Activated B cell treated with CpG ODN at 0.5 μM for 24 hours (primary cell): ENCODE measurements at regions of chr5 and their contacts with region 1.

Region 1: DNA sequence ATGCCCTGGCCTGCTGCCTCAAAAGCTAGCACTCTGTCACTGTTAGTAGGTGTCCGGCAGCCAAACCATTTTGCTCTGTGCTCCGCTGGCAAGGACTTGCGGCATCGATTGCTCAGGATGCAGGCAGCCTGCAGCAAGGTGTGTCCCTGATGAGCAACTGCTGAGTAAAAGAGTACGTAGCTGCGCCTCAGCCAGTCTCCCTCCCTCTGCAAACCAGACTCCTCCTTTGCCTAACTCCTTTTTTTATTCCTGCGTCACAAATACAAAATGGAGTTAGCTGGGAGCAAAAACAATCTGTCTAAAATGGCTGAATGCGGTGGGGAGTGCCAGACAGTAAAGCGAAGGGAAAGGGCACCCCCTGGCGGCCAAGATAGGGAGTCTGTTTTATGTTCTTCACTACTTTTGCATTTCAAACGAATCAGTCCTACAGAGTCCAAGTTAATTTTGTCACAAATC is 61.1 kb downstream of the DIAPH1 start:
- DNase-seq: peak; percentile 66
- ATAC-seq: peak; percentile 82
- H3K4me3 Mint-ChIP-seq: no peak overlapping the region
- H3K27ac Mint-ChIP-seq: peak overlapping the region; percentile 72
- H3K4me1 Mint-ChIP-seq: peaks cover 4% of the 10 kb centered on the region
- H3K27me3 Mint-ChIP-seq: no peaks in the 10 kb centered on the region
- CTCF ChIP-seq: peak; percentile 38

Region 2: DNA sequence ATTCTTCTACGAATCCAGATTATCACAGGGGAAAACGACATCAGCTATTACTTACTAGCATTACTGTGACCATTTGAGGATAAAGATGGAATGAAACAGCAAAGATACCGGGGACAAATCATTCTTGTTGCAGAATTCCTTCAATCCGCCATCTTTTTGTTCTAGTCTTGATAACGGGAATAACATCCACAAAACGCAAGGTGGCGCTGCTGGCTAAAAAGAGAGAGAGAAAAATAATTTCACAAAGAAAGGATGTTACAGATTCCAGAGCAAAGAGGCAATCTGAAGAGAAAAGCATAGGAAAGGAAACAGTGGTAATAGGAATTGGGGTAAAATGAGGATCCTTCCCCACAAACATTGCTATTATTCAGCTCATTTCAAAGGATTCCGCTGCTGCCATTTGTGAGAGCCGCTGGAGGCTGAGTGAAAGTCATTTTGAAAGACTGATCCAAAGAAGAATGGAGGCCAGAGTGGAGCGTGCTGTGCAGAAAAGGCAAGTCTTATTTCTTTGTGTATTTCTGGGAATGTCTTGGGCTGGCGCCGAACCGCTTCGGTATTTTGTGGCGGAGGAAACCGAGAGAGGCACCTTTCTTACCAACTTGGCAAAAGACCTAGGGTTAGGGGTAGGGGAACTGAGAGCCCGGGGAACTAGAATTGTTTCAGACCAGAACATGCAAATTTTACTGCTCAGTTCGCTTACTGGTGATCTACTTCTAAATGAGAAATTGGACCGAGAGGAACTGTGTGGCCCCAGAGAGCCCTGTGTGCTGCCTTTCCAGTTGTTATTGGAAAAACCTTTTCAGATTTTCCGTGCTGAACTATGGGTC is 385.1 kb before region 1 on chr5 and contains the start of gene PCDHB7:
- CTCF ChIA-PET with region 1: no interaction called
- POLR2A ChIA-PET with region 1: no interaction called
- intact Hi-C with region 1: loop called (anchors 5 kb)
- DNase-seq: no peak
- ATAC-seq: no peak
- H3K4me3 Mint-ChIP-seq: no peak within 1 kb of the TSS
- H3K27ac Mint-ChIP-seq: no peak within 1 kb of the TSS
- H3K4me1 Mint-ChIP-seq: peaks cover 5% of the 10 kb centered on the region
- H3K27me3 Mint-ChIP-seq: peaks cover 13% of the 10 kb centered on the region
- CTCF ChIP-seq: no peak
- total RNA-seq, gene PCDHB7: not detected in 2 replicates

Region 3: DNA sequence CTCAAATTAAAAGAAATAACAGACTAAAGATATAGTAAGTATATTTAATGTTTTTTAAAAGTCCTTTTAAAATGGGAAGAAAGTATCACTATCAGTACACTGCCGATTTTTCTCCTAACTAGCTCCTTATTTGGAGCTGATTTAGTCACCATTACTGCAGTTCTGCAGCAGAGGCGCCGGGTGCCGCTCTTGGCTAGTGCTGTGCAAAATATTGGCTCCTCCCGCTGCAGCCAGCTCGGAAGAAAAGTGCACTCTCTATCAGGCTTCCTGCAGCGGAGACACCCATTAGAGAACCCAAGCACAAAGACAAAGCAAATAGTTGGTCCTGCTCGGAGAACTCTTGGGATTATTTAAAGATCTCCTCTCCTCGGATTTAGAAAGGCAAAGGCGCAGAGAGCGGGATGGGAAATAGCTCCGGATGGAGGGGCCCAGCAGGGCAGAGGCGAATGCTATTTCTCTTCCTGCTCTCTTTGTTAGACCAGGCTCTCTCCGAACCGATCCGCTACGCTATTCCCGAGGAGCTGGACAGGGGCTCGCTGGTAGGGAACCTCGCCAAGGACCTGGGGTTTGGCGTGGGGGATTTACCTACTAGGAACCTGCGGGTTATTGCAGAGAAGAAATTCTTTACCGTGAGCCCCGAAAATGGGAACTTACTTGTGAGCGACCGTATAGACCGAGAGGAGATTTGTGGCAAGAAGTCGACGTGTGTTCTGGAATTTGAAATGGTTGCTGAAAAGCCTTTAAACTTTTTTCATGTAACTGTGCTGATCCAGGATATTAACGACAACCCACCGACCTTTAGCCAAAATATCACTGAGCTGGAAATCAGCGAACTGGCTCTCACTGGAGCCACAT is 187.5 kb before region 1 on chr5 and contains the start of gene PCDHGB3:
- CTCF ChIA-PET with region 1: interaction called, 5 read pairs
- POLR2A ChIA-PET with region 1: no interaction called
- intact Hi-C with region 1: loop called (anchors 1 kb)
- DNase-seq: no peak
- ATAC-seq: peak; percentile 64
- H3K4me3 Mint-ChIP-seq: peak within 1 kb of the TSS; percentile 81
- H3K27ac Mint-ChIP-seq: no peak within 1 kb of the TSS
- H3K4me1 Mint-ChIP-seq: peaks cover 7% of the 10 kb centered on the region
- H3K27me3 Mint-ChIP-seq: peaks cover 54% of the 10 kb centered on the region
- CTCF ChIP-seq: no peak
- total RNA-seq, gene PCDHGB3: 2.0 and 2.6 TPM in 2 replicates

Region 4: DNA sequence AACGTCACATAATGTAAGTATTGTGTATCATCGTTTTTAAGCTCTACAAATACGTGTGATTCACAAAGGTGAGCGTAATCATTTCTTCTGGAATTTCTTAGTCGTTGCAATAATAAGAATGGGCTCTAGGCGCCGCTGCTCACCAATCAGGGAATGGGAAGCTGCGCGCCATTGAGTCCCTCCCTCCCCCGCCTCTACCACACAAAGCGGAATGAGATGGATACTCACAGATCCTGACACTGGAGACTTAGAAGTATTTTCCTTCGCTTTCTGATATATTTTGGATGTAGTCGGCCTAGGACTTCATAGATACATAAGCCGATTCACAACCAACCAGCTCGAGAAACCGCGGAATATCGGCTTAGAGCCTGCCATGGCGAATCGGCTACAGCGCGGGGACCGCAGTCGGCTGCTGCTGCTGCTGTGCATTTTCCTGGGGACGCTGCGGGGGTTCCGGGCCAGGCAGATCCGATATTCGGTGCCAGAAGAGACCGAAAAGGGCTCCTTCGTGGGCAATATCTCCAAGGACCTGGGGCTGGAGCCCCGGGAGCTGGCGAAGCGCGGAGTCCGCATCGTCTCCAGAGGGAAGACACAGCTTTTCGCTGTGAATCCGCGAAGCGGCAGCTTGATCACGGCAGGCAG is 136.7 kb before region 1 on chr5 and contains the start of gene PCDHGA11:
- CTCF ChIA-PET with region 1: interaction called, 23 read pairs
- POLR2A ChIA-PET with region 1: interaction called, 5 read pairs
- intact Hi-C with region 1: no loop called
- DNase-seq: no peak
- ATAC-seq: peak; percentile 69
- H3K4me3 Mint-ChIP-seq: peak within 1 kb of the TSS; percentile 85
- H3K27ac Mint-ChIP-seq: no peak within 1 kb of the TSS
- H3K4me1 Mint-ChIP-seq: peaks cover 9% of the 10 kb centered on the region
- H3K27me3 Mint-ChIP-seq: peaks cover 50% of the 10 kb centered on the region
- CTCF ChIP-seq: no peak
- total RNA-seq, gene PCDHGA11: 0.73 and 1.1 TPM in 2 replicates

Region 5: DNA sequence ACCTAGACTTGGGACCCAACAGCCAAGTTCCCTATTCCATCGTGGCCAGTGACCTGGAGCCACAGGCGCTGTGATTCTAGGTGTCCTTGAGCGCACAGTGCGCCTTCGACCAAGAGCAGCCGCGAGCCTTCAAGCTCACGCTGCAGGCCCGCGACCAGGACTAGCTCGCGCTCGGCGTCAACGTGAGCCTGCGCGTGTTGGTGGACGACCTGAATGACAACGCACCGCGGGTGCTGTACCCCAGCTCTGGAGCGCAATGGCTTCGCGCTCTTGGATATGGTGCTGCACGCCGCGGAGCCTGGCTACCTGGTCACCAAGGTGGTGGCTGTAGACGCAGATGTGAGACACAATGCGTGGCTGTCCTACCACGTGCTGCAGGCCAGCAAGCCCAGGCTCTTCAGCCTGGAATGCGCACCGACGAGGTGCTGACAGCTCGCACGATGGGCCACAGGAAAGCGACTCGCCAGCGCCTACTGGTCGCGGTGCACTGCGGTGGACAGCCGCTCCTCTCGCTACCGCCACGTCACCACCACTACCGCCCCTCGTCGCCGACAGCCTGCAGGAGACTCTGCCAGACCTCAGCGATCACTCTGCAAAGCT is 116.0 kb before region 1 on chr5:
- CTCF ChIA-PET with region 1: no interaction called
- POLR2A ChIA-PET with region 1: no interaction called
- intact Hi-C with region 1: no loop called
- DNase-seq: no peak
- ATAC-seq: no peak
- H3K4me3 Mint-ChIP-seq: no peak overlapping the region
- H3K27ac Mint-ChIP-seq: no peak overlapping the region
- H3K4me1 Mint-ChIP-seq: peaks cover 4% of the 10 kb centered on the region
- H3K27me3 Mint-ChIP-seq: peaks cover 1% of the 10 kb centered on the region
- CTCF ChIP-seq: no peak

Region 6: DNA sequence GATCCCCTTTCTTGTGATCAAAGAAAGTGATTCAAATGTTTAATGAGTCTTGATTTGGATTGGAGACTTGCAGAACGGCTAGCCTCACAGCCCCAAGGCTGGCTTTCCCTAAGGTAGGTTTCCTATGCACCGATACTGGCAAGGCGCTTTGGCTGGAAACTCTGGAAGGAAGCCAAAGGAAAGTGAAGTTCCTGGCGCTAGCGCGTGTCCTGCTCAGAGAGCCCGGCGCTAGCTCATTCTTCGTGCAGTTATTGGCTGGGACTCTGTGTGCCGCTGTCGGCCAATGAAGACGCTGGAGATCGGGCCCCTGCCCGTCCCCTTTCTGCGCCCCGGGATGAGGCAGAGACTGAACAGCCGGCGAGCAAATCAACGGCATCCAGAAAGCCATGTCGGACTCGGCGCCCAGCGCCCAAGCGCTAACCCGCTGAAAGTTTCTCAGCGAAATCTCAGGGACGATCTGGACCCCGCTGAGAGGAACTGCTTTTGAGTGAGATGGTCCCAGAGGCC is 82.0 kb before region 1 on chr5 and contains the start of gene PCDHGC3:
- CTCF ChIA-PET with region 1: interaction called, 19 read pairs
- POLR2A ChIA-PET with region 1: no interaction called
- intact Hi-C with region 1: loop called (anchors 1 kb)
- DNase-seq: no peak
- ATAC-seq: peak; percentile 96
- H3K4me3 Mint-ChIP-seq: peak within 1 kb of the TSS; percentile 93
- H3K27ac Mint-ChIP-seq: peak within 1 kb of the TSS; percentile 32
- H3K4me1 Mint-ChIP-seq: peaks cover 28% of the 10 kb centered on the region
- H3K27me3 Mint-ChIP-seq: peaks cover 32% of the 10 kb centered on the region
- CTCF ChIP-seq: no peak
- total RNA-seq, gene PCDHGC3: 2.6 and 3.3 TPM in 2 replicates